ENCODE measurements at regions of chr2 and their contacts with region 1.

Region 1: GRCh38 chr2:182666674-182667314 is 49.3 kb upstream of the DNAJC10 start:
- DNase-seq: no peak
- H3K4me3 ChIP-seq: no peak overlapping the region
- H3K27ac ChIP-seq: no peak overlapping the region
- H3K4me1 ChIP-seq: no peaks in the 10 kb centered on the region
- H3K27me3 ChIP-seq: no peaks in the 10 kb centered on the region
- CTCF ChIP-seq: peak in 2 of 3 experiments; percentile 37 to 55; a peak in 2 of 4 replicates
- EP300 ChIP-seq: no peak
- POLR2A ChIP-seq: no peak
- RAD21 ChIP-seq: peak; percentile 38 to 46

Region 2: GRCh38 chr2:182682210-182682609 is 15.4 kb after region 1 on chr2:
- CTCF ChIA-PET with region 1: interaction called, 10 read pairs
- POLR2A ChIA-PET with region 1: no interaction called
- DNase-seq: no peak
- H3K4me3 ChIP-seq: no peak overlapping the region
- H3K27ac ChIP-seq: no peak overlapping the region
- H3K4me1 ChIP-seq: no peaks in the 10 kb centered on the region
- H3K27me3 ChIP-seq: no peaks in the 10 kb centered on the region
- CTCF ChIP-seq: no peak
- EP300 ChIP-seq: no peak
- POLR2A ChIP-seq: no peak
- RAD21 ChIP-seq: no peak

Region 3: DNA sequence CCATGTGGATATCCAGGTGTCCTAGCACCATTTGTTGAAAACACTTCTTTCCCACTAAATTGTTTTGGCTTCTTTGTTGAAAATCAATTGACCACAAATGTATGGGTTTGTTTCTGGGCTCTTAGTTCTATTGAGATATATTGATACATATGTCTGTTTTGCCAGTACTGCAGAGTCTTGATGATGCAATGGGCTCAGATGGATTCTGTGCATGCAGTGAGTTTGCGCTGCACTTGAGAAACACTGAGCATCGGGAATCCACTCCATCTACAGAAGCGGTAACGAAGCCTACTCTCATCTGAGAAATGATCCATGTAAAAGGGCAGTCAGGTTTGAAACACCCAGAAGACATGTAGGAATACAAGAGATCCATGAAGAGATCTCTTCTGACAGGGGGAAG is 27.4 kb after region 1 on chr2:
- CTCF ChIA-PET with region 1: no interaction called
- POLR2A ChIA-PET with region 1: no interaction called
- DNase-seq: no peak
- H3K4me3 ChIP-seq: no peak overlapping the region
- H3K27ac ChIP-seq: no peak overlapping the region
- H3K4me1 ChIP-seq: no peaks in the 10 kb centered on the region
- H3K27me3 ChIP-seq: no peaks in the 10 kb centered on the region
- CTCF ChIP-seq: no peak
- EP300 ChIP-seq: no peak
- POLR2A ChIP-seq: no peak
- RAD21 ChIP-seq: no peak

Region 4: DNA sequence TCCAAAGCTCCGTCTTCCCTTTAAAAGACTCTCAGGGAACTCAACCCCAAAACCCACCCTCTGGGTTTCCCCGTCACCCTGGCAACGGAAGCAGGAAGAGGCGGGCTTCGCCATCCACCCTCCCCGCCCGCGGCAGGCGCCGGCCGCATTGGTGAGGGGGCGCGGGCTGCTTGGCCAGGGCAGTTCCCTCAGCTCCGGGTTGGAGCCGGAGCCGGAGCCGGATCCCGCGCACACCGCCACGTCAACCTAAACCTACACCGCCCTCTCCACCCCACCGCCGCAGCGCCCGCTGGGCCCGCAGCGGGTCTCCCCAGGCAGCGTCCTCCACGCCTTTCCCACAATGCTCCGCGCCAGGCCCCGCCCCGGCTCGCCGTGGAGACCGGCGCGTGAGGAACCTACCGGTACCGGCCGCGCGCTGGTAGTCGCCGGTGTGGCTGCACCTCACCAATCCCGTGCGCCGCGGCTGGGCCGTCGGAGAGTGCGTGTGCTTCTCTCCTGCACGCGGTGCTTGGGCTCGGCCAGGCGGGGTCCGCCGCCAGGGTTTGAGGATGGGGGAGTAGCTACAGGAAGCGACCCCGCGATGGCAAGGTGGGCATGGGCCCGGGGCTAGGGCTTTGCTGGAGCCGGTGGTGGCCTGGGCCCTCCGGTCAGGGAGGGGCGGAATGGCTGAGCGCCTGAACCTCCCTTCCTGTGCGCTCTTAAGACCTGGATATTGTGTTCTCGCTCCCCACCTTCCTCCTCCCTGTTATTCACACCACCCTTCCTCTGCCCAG is 49.3 kb after region 1 on chr2 and contains the start of gene DNAJC10:
- CTCF ChIA-PET with region 1: interaction called, 11 read pairs
- POLR2A ChIA-PET with region 1: interaction called, 3 read pairs
- DNase-seq: peak; percentile 70 to 94
- H3K4me3 ChIP-seq: peak within 1 kb of the TSS; percentile 79 to 95 (median 82)
- H3K27ac ChIP-seq: peak within 1 kb of the TSS; percentile 69
- H3K4me1 ChIP-seq: no peaks in the 10 kb centered on the region; a peak in 1 of 7 replicates
- H3K27me3 ChIP-seq: no peaks in the 10 kb centered on the region
- CTCF ChIP-seq: no peak
- EP300 ChIP-seq: peak in 1 of 2 experiments; percentile 56; a peak in 1 of 3 replicates
- POLR2A ChIP-seq: peak; percentile 91 to 97
- RAD21 ChIP-seq: no peak
- total RNA-seq, gene DNAJC10: 121 and 128 TPM in 2 replicates

Region 5: GRCh38 chr2:182933629-182934028 is 266.8 kb after region 1 on chr2:
- CTCF ChIA-PET with region 1: no interaction called
- POLR2A ChIA-PET with region 1: no interaction called
- DNase-seq: no peak
- H3K4me3 ChIP-seq: no peak overlapping the region
- H3K27ac ChIP-seq: no peak overlapping the region
- H3K4me1 ChIP-seq: peaks cover 0 to 2% (median 0%) of the 10 kb centered on the region in 4 experiments; a peak in 1 of 7 replicates
- H3K27me3 ChIP-seq: no peaks in the 10 kb centered on the region
- CTCF ChIP-seq: no peak
- EP300 ChIP-seq: no peak
- POLR2A ChIP-seq: no peak
- RAD21 ChIP-seq: no peak

Measured in H1 (cell line).